Heart right ventricle (tissue), 16 donors: ENCODE measurements at regions of chr14 and their contacts with region 1.

Region 1: DNA sequence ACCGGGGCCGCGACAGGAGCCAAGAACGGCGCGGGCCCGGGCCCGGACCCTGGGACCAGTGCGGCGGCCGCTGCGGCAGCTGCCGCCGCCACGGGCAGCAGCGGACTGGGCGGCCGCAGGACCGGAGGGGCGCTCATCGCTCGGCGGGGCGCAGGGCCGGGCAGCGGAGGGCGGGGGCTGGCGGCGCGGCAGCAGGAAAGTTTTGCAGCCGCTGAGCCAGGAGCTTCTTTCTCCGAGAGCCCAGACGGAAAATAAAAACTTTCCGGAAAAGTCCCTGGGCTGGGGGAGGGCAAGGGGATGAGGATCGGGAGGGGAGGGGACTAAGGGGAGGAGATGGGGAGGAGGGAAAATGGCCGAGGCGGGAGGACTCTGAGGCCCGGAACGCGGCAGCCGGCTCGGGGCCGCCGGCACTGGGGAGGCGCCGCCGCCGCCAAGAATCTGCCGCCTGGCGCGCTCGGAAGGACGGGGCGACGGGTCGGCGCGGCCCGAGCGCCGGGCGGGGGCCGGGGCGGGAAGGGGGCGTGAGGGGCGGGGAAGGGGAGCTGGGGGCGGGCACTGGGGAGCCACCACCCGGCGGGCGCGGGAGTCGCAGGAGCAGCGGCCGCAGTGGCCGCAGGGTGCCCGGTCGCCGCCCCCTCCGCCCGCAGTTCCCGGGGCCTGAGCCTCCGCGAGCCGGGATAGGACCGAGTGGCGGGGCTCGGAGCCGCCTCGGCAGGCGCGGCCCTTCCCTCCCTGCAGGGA is at the start of gene PRKD1:
- DNase-seq: peak; percentile 69 to 76
- ATAC-seq: peak; percentile 77 to 91 (median 86)
- H3K4me3 ChIP-seq: peak within 1 kb of the TSS; percentile 62 to 85 (median 76)
- H3K27ac ChIP-seq: peak within 1 kb of the TSS; percentile 19 to 90 (median 78)
- H3K4me1 ChIP-seq: peaks cover 6 to 33% (median 17%) of the 10 kb centered on the region in 9 donors
- H3K27me3 ChIP-seq: peaks cover 0 to 27% (median 0%) of the 10 kb centered on the region in 7 donors
- CTCF ChIP-seq: peak in 8 of 9 donors; percentile 18 to 60 (median 31)
- total RNA-seq, gene PRKD1: 1.7 to 4.3 (median 3.1) TPM

Region 2: DNA sequence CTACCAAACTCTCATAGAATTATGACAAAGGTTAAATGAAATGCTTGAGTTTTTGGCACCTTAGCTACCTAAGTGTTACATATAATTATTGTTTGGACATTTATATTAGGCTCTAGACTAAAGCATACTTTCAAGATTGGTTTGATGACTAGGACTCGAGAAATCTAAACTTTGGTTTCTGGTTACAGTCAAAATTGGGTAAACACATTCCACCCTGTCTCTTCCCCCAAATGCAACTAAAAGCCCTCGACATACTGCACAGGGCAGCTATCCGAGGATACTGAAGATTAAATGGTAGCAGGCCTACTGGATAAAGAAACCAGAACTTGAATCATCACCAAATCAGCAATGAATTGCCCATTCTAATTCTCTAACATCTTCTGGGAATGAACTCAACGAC is 369.0 kb before region 1 on chr14:
- intact Hi-C with region 1: loop called in 1 of 10 experiments (anchors 10 kb)
- DNase-seq: no peak
- ATAC-seq: no peak
- H3K4me3 ChIP-seq: no peak overlapping the region
- H3K27ac ChIP-seq: no peak overlapping the region
- H3K4me1 ChIP-seq: peaks cover 0 to 1% (median 0%) of the 10 kb centered on the region in 9 donors
- H3K27me3 ChIP-seq: no peaks in the 10 kb centered on the region
- CTCF ChIP-seq: no peak

Region 3: GRCh38 chr14:29710015-29710565 is 217.5 kb before region 1 on chr14:
- intact Hi-C with region 1: loop called in 1 of 10 experiments (anchors 10 kb)
- DNase-seq: no peak
- ATAC-seq: no peak
- H3K4me3 ChIP-seq: no peak overlapping the region
- H3K27ac ChIP-seq: no peak overlapping the region
- H3K4me1 ChIP-seq: no peaks in the 10 kb centered on the region
- H3K27me3 ChIP-seq: no peaks in the 10 kb centered on the region
- CTCF ChIP-seq: peak; percentile 7 to 60 (median 39)

Region 4: GRCh38 chr14:29741909-29742401 is 185.6 kb before region 1 on chr14:
- intact Hi-C with region 1: loop called in 3 of 10 experiments (anchors 10 kb)
- DNase-seq: peak in 1 of 2 donors; percentile 65
- ATAC-seq: peak; percentile 70 to 91 (median 82)
- H3K4me3 ChIP-seq: peak overlapping the region in 3 of 10 donors; percentile 6 to 16 (median 7)
- H3K27ac ChIP-seq: peak overlapping the region in 8 of 10 donors; percentile 18 to 51 (median 29)
- H3K4me1 ChIP-seq: peaks cover 0 to 76% (median 44%) of the 10 kb centered on the region in 9 donors
- H3K27me3 ChIP-seq: no peaks in the 10 kb centered on the region
- CTCF ChIP-seq: no peak

Region 5: GRCh38 chr14:29810682-29811081 is 116.9 kb before region 1 on chr14:
- intact Hi-C with region 1: loop called in 1 of 10 experiments (anchors 5 kb)
- DNase-seq: peak in 1 of 2 donors; percentile 14
- ATAC-seq: peak in 1 of 8 donors; percentile 46
- H3K4me3 ChIP-seq: no peak overlapping the region
- H3K27ac ChIP-seq: no peak overlapping the region
- H3K4me1 ChIP-seq: peaks cover 0 to 37% (median 21%) of the 10 kb centered on the region in 9 donors
- H3K27me3 ChIP-seq: no peaks in the 10 kb centered on the region
- CTCF ChIP-seq: no peak

Region 6: GRCh38 chr14:29892327-29892726 is 35.2 kb before region 1 on chr14:
- intact Hi-C with region 1: no loop called
- DNase-seq: no peak
- ATAC-seq: no peak
- H3K4me3 ChIP-seq: no peak overlapping the region
- H3K27ac ChIP-seq: no peak overlapping the region
- H3K4me1 ChIP-seq: peaks cover 0 to 11% (median 0%) of the 10 kb centered on the region in 9 donors
- H3K27me3 ChIP-seq: no peaks in the 10 kb centered on the region
- CTCF ChIP-seq: no peak

Region 7: GRCh38 chr14:29911815-29912214 is 15.7 kb before region 1 on chr14:
- intact Hi-C with region 1: loop called in 1 of 10 experiments (anchors 2 kb)
- DNase-seq: no peak
- ATAC-seq: no peak
- H3K4me3 ChIP-seq: no peak overlapping the region
- H3K27ac ChIP-seq: no peak overlapping the region
- H3K4me1 ChIP-seq: peaks cover 0 to 10% (median 3%) of the 10 kb centered on the region in 9 donors
- H3K27me3 ChIP-seq: no peaks in the 10 kb centered on the region
- CTCF ChIP-seq: no peak

Region 8: DNA sequence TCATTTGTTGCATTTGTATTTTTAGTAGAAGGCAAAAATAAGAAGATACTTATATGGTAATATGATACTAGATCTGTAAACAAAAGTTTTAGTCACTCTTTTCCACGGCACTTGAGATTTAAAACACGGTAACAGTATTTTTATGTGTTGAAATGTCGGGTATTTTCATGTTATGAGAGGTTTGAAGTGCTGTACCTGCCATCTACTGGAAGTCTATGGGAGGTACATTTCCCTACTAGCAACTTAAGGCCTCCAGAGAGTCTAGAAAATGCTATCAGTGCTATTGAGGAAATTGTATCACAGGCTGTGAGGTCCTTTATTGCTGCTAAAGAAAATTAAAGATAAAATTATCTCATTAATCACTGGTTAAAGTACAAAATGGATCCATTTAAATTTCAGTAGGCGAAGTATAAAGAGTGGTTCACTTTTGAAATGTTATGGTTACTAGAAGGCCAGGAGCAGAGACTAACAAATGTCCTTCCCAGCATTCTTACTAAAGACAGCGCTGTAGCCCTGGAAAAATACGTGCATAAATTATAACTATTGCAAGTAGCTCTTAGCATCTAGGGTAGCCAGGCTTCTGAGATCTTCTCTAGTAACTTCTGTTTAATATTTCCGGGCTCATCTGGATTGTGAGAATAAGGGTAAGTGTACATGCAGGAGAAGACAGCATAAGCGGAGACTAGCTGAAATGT is 77.7 kb after region 1 on chr14:
- intact Hi-C with region 1: loop called in 1 of 10 experiments (anchors 2 kb)
- DNase-seq: no peak
- ATAC-seq: peak in 7 of 8 donors; percentile 43 to 82 (median 62)
- H3K4me3 ChIP-seq: no peak overlapping the region
- H3K27ac ChIP-seq: no peak overlapping the region
- H3K4me1 ChIP-seq: no peaks in the 10 kb centered on the region
- H3K27me3 ChIP-seq: no peaks in the 10 kb centered on the region
- CTCF ChIP-seq: peak; percentile 57 to 88 (median 80)

Region 9: DNA sequence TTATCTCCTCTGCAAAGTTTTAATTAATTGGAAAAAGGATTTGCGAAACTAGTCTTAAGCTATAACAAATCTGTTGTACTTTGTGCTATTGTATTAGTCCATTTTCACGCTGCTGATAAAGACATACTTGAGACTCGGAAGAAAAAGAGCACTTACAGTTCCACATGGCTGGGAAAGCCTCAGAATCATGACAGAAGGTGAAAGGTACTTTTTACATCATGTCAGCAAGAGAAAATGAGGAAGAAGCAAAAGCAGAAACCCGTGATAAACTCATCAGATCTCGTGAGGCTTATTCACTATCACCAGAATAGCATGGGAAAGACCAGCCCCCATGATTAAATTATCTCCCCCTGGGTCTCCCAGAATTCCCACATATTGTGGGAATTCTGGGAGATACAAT is 118.2 kb after region 1 on chr14:
- intact Hi-C with region 1: no loop called
- DNase-seq: no peak
- ATAC-seq: no peak
- H3K4me3 ChIP-seq: no peak overlapping the region
- H3K27ac ChIP-seq: no peak overlapping the region
- H3K4me1 ChIP-seq: no peaks in the 10 kb centered on the region
- H3K27me3 ChIP-seq: no peaks in the 10 kb centered on the region
- CTCF ChIP-seq: no peak